ENCODE measurements at regions of chr21 and their contacts with region 1.

Region 1: GRCh38 chr21:46399129-46399528 is 59.6 kb upstream of the DIP2A start:
- DNase-seq: no peak
- ATAC-seq: no peak
- H3K4me3 ChIP-seq: no peak overlapping the region
- H3K4me3 Mint-ChIP-seq: no peak overlapping the region
- H3K27ac ChIP-seq: no peak overlapping the region
- H3K27ac Mint-ChIP-seq: no peak overlapping the region
- H3K4me1 ChIP-seq: no peaks in the 10 kb centered on the region
- H3K4me1 Mint-ChIP-seq: no peaks in the 10 kb centered on the region
- H3K27me3 ChIP-seq: no peaks in the 10 kb centered on the region
- H3K27me3 Mint-ChIP-seq: no peaks in the 10 kb centered on the region

Region 2: DNA sequence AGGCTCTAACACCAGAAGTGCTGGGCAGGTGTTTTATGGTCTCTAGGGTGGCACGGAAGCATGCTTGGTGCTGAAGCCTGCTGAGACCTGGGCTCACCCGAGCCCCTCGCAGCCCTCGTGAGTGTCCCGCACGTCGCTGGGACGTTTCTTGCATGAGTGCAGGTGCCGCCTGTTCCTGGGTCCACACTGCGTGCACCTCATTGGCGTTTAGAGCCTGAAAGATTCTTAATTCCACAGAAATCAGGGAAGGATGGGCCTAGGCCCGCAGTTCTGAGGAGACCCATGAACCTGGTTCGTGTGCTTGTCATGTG is 15.8 kb after region 1 on chr21:
- CTCF ChIA-PET with region 1: interaction called in 1 of 2 experiments, 10 read pairs
- POLR2A ChIA-PET with region 1: no interaction called
- DNase-seq: no peak
- ATAC-seq: no peak
- H3K4me3 ChIP-seq: no peak overlapping the region
- H3K4me3 Mint-ChIP-seq: no peak overlapping the region
- H3K27ac ChIP-seq: no peak overlapping the region
- H3K27ac Mint-ChIP-seq: no peak overlapping the region
- H3K4me1 ChIP-seq: peaks cover 0 to 1% of the 10 kb centered on the region in 2 experiments
- H3K4me1 Mint-ChIP-seq: peaks cover 0 to 5% (median 0%) of the 10 kb centered on the region in 3 donors
- H3K27me3 ChIP-seq: no peaks in the 10 kb centered on the region
- H3K27me3 Mint-ChIP-seq: no peaks in the 10 kb centered on the region